Activated naive CD4-positive, alpha-beta T cell treated with anti-CD3 and anti-CD28 coated beads for 36 hours (primary cell): ENCODE measurements at regions of chr20 and their contacts with region 1.

Region 1: DNA sequence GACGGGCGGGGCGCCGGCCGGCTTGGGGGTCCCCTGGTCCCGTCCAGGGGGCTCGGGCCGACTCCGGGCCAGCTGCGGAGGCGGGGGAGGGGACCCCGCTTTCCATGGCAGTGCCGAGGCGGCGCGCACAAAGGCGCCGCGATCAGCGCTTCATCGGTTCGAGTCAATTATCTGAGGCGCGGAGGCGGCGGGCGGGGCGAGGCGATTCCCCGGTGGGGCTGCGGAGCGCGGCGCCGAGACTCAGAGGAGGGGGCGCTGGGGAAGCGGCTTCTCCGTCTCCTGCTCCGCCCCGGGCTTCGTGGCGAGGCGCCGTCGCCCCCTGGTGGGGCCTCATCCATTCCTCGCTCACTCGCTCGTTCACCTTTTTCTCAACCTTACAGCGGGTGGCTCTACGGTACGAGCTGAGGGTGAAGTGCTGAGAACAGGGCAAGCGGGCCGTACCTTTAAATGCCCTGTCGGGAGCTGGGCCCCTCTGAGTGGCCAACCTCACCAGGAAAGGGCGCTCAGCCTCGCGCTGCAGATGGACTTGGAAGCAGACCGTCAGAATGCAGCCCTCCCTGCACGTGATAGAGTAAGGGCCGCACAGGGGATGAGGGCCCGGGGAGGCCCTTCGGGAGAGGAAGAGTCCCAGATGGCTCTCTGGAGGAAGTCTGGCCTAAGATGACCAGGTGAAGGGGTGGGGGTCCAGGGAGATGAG is 39.9 kb downstream of the SLC52A3 start:
- DNase-seq: peak; percentile 69
- H3K4me3 Mint-ChIP-seq: no peak overlapping the region
- H3K27ac Mint-ChIP-seq: no peak overlapping the region
- H3K4me1 Mint-ChIP-seq: no peaks in the 10 kb centered on the region
- H3K27me3 Mint-ChIP-seq: peaks cover 40% of the 10 kb centered on the region

Region 2: DNA sequence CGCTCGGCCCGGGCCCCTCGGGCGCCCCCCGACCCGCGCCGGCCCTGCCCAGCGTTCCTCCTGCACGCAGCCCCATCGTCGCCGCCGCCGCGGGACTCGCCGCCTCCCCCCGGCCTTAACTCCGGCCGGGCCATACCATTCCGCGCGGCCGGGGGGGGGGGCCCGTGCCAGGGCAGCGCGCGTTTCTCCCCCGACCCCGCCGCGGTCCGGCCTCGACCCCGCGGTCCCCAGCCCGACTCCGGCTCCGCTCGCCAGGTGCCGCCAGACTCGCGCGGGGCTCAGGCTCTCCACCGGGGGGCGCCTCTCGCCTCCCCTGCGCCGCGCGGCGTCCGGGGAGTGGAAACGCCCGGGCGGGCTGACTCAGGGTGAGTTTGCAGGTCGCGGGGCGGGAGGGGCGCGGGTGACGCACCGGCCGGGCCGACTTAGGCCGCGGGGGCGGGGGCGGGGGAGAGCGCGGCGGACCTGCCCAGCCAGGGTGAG is 75.2 kb before region 1 on chr20 and contains the start of gene SRXN1:
- CTCF ChIA-PET with region 1: no interaction called
- intact Hi-C with region 1: loop called (anchors 2 kb)
- DNase-seq: peak; percentile 86
- H3K4me3 Mint-ChIP-seq: peak within 1 kb of the TSS; percentile 72
- H3K27ac Mint-ChIP-seq: peak within 1 kb of the TSS; percentile 4
- H3K4me1 Mint-ChIP-seq: peaks cover 8% of the 10 kb centered on the region
- H3K27me3 Mint-ChIP-seq: peaks cover 13% of the 10 kb centered on the region
- total RNA-seq, gene SRXN1: 6.7 to 6.8 TPM